ENCODE measurements at regions of chrX and their contacts with region 1.

Region 1: DNA sequence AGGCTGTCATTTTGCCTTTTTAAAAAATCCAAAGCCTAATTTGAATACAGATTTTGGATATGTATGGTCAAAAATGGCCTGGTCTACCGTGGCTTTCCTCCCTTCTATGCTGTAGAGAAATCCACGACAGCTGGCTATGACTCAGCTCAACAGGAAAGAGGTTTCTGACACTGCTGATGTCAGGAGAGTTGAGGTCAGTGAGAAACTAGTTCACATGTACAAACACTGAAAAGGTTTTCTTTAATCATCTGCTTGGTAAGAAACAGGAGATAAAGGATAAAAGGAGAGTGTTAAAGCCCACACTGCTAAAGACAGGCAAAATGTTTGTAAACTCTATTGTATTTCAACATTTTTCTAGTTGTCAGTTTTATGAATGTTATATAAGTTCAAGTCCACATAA is 113.9 kb downstream of the NYX start:
- DNase-seq: peak; percentile 60
- ATAC-seq: peak; percentile 80
- H3K4me3 Mint-ChIP-seq: no peak overlapping the region
- H3K27ac Mint-ChIP-seq: peak overlapping the region; percentile 38
- H3K4me1 Mint-ChIP-seq: peaks cover 51% of the 10 kb centered on the region
- H3K27me3 Mint-ChIP-seq: no peaks in the 10 kb centered on the region
- CTCF ChIP-seq: no peak

Region 2: DNA sequence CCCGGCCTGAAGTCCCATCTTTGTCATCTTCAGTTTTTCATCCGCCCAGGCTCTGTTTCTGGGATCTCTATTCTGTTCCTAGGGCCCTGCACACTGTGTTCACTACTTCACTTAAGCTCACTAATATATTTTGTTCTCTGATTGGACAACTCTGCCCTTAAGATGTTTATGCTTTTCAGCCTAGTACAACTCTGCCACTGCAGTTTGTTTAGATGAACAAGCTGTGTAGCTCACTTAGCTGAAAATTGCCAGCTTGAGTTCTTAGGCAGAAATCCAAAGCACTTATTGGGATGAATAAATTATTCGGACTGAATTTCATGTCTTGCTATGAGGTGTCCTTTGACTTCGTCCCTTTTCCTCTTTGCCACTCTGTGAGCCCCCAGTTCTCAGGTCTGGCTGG is 53.1 kb before region 1 on chrX:
- CTCF ChIA-PET with region 1: no interaction called
- POLR2A ChIA-PET with region 1: no interaction called
- intact Hi-C with region 1: no loop called
- DNase-seq: no peak
- ATAC-seq: no peak
- H3K4me3 Mint-ChIP-seq: no peak overlapping the region
- H3K27ac Mint-ChIP-seq: no peak overlapping the region
- H3K4me1 Mint-ChIP-seq: peaks cover 6% of the 10 kb centered on the region
- H3K27me3 Mint-ChIP-seq: no peaks in the 10 kb centered on the region
- CTCF ChIP-seq: no peak

Region 3: DNA sequence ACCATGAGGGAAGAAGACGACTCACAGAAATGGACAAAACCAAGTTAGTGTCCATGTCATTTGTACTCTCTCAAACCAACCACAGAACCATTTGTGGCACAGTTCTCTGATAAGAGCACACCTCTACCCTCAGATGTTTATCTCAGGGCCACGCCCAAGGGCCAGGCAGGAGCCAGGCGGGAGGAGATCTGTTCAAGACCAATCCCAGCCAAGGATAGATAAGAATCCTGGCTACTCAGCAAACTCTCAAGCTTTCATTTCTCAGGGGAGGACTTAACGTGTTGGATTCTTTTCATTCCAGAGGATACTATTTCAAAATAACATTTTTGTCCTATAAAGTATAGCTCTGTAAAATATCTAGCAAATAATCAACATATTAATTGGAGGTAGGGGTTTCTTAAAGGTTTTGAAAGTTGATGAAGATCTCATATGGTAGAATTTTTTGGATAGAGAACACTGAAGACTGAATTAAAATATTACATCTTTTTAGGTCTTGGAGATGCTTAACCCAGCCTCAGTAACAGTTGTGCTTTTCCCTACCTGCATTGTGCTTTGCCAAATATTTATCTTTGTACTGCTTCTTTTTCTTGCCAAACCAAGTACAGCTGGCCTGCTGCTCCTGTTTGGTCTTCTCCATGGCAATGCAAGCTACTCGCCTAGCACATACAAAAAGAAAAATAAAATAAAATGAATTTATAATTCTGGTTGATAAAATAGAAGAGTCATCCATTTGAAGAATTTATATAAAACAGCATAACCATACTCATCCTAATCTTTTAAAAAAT is 18.7 kb before region 1 on chrX:
- CTCF ChIA-PET with region 1: no interaction called
- POLR2A ChIA-PET with region 1: no interaction called
- intact Hi-C with region 1: no loop called
- DNase-seq: no peak
- ATAC-seq: no peak
- H3K4me3 Mint-ChIP-seq: no peak overlapping the region
- H3K27ac Mint-ChIP-seq: no peak overlapping the region
- H3K4me1 Mint-ChIP-seq: no peaks in the 10 kb centered on the region
- H3K27me3 Mint-ChIP-seq: no peaks in the 10 kb centered on the region
- CTCF ChIP-seq: no peak

Region 4: DNA sequence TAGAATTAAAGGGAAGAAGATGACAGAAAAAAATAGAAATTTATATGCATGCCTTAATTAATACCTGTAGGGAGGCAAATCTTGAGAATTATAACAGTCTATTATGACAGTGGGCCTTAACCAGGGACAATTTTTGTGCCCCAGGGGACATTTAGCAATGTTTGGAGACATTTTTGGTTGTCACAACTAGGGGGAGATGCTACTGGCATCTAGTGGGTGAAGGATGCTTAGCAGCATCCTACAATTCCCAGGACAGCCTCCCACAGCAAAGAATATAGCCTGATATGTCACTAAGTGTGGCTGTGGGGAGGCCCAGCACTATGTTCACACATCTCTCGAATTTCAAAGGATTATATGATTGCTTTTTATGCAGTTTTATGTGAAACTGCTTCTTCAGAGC is 173.5 kb after region 1 on chrX:
- CTCF ChIA-PET with region 1: interaction called, 3 read pairs
- POLR2A ChIA-PET with region 1: no interaction called
- intact Hi-C with region 1: loop called (anchors 10 kb)
- DNase-seq: peak; percentile 12
- ATAC-seq: peak; percentile 31
- H3K4me3 Mint-ChIP-seq: peak overlapping the region; percentile 50
- H3K27ac Mint-ChIP-seq: peak overlapping the region; percentile 90
- H3K4me1 Mint-ChIP-seq: peaks cover 36% of the 10 kb centered on the region
- H3K27me3 Mint-ChIP-seq: no peaks in the 10 kb centered on the region
- CTCF ChIP-seq: peak; percentile 62

Region 5: DNA sequence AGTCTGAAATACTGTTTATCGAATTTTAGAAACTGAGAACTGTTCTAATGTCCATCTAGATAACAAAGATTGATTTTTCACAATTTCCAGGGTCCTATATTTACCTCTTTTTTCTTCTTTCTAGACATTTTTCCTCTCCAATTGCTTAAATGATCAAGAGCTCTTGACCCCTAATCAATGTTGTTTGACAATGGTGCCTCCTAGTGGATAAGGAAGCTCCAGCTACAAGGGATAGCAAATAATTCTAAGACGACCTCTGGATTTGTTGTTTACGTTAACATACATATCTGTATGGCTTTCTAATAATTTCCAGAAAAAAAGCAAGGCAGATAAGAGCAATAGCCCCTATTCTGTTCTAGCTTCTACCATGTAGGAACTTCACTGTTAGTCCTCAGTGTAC is 198.8 kb after region 1 on chrX:
- CTCF ChIA-PET with region 1: interaction called, 20 read pairs
- POLR2A ChIA-PET with region 1: no interaction called
- intact Hi-C with region 1: loop called (anchors 10 kb)
- DNase-seq: peak; percentile 6
- ATAC-seq: no peak
- H3K4me3 Mint-ChIP-seq: no peak overlapping the region
- H3K27ac Mint-ChIP-seq: no peak overlapping the region
- H3K4me1 Mint-ChIP-seq: peaks cover 9% of the 10 kb centered on the region
- H3K27me3 Mint-ChIP-seq: no peaks in the 10 kb centered on the region
- CTCF ChIP-seq: peak; percentile 57

Measured in activated CD8-positive, alpha-beta T cell treated with anti-CD3 and anti-CD28 coated beads for 36 hours (primary cell).